Cardiac septum (tissue), 1 donor: ENCODE measurements at regions of chr11 and their contacts with region 1.

Region 1: DNA sequence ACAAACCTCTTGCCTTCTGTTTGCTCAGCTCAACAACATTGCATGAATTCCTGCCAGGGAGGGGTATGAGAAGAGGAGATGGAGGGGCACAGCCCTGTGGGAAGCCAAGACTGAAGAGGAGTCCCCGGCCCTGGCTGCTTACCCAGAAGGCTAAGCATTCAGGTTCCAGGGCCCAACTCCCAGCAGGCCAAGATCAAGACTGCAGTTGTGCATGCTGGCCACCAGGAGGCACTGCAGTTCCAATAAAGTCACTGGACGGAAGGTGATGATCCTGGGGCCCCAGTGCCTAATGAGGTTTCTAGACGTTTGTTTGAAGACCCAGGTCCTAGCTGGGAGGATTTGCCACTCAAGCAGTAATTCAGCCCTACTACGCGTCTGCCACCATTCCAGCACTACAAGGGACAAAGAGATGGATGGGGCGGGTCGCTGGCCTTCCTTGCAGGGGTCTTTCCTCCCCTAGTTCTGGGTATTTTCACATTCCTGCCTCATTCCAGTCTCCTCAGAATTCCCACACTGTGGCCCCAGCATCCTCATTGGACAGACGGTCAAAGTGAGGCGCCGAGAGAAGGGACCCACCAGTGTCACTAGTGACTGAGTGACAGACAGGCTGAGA is 23.6 kb downstream of the ALX4 start:
- DNase-seq: no peak

Region 2: GRCh38 chr11:44110231-44110679 is 176.1 kb before region 1 on chr11:
- intact Hi-C with region 1: loop called (anchors 5 kb)
- DNase-seq: no peak

Region 3: DNA sequence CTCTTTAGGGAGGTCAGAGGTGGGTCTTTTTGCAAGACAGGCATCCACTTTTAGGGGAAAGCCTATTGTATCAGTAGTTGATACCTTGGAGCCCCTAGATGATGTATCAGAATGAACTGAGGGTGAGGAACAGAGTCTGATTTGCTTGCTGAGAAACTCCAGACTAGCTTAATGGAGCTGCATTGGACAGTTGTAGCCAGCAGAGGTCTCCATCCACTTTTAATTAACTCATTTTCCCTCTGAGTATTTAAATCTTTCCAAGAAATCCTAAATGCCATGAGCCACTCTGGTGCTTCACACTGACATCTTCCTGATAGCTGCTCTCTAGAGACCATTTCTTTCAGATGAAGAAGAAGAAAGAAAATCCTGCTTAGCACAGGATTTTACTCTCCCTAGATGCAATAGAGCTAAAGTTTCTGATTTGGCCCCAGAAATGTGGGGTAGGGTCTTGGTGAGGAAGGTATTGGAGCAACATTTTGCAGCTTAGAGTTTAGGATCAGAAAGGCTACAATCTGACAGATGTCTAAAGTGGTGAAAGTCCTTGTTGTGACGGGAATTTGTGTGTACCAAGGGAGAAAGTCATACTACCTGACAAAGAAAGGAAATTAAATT is 152.9 kb before region 1 on chr11:
- intact Hi-C with region 1: loop called (anchors 5 kb)
- DNase-seq: no peak

Region 4: GRCh38 chr11:44171518-44171917 is 114.9 kb before region 1 on chr11:
- intact Hi-C with region 1: no loop called
- DNase-seq: no peak

Region 5: DNA sequence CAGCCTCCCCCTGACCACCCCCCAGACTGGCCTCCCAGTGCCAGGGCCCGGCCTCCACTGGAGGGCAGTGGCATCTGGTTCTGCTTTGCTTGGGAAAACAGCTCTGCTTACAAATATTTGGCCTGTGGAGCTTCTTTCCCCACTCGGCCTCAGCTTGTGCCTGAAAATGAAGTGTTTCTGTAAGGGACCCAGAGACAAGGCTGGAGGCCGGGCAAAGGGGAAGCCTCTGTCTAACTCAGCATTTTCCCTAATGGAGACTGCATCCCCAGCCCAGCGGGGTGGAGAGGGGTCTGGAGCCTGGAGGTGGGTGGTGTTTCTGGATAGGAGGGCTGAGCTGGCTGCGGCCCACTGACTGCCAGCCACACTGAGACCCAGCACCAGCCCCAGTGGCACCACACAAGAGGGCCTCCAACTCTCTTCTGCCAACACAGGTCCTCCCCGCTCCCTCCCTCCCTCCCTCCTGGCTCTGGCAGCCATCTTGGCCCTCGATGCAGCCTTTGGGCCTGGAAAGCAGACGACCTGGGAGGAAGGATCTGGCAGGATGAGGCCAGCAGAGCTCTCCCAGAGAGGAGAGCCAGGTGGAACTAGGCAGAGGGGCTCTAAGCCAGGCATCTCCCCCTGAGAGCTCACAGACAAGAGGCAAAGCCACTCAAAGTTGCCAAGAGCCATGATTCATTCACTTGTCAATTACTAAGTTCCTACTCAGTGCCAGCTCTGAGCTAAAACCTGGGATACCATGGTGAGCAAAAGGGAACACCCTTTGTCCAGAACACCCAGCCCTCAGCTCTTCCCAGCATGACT is 202.0 kb after region 1 on chr11:
- intact Hi-C with region 1: loop called (anchors 5 kb)
- DNase-seq: no peak

Region 6: GRCh38 chr11:44538375-44539054 is 252.1 kb after region 1 on chr11:
- intact Hi-C with region 1: loop called (anchors 1 kb)
- DNase-seq: peak; percentile 89

Region 7: GRCh38 chr11:44709966-44710365 is 423.6 kb after region 1 on chr11:
- intact Hi-C with region 1: no loop called
- DNase-seq: no peak